ENCODE measurements at regions of chr7 and their contacts with region 1.

Region 1: GRCh38 chr7:35329026-35329425 is 75.1 kb upstream of the TBX20 start:
- DNase-seq: no peak
- H3K4me3 ChIP-seq: no peak overlapping the region
- H3K27ac ChIP-seq: no peak overlapping the region
- H3K4me1 ChIP-seq: no peaks in the 10 kb centered on the region
- H3K27me3 ChIP-seq: no peaks in the 10 kb centered on the region
- CTCF ChIP-seq: no peak
- EP300 ChIP-seq: no peak
- POLR2A ChIP-seq: no peak

Region 2: GRCh38 chr7:36389371-36390198 is 1060.6 kb after region 1 on chr7 and contains the start of gene ANLN:
- in situ Hi-C with region 1: no loop called
- intact Hi-C with region 1: loop called (anchors 5 kb)
- DNase-seq: peak; percentile 95
- H3K4me3 ChIP-seq: peak within 1 kb of the TSS; percentile 51 to 86 (median 70)
- H3K27ac ChIP-seq: peak within 1 kb of the TSS; percentile 84 to 88 (median 86)
- H3K4me1 ChIP-seq: peaks cover 0 to 29% (median 13%) of the 10 kb centered on the region in 4 donors
- H3K27me3 ChIP-seq: no peaks in the 10 kb centered on the region
- CTCF ChIP-seq: no peak
- EP300 ChIP-seq: no peak
- POLR2A ChIP-seq: no peak
- total RNA-seq, gene ANLN: 0.37 to 97.1 (median 5.7) TPM

Measured in transverse colon (tissue), 4 donors.